Activated naive CD4-positive, alpha-beta T cell treated with anti-CD3 and anti-CD28 coated beads for 36 hours (primary cell): ENCODE measurements at regions of chr19 and their contacts with region 1.

Region 1: DNA sequence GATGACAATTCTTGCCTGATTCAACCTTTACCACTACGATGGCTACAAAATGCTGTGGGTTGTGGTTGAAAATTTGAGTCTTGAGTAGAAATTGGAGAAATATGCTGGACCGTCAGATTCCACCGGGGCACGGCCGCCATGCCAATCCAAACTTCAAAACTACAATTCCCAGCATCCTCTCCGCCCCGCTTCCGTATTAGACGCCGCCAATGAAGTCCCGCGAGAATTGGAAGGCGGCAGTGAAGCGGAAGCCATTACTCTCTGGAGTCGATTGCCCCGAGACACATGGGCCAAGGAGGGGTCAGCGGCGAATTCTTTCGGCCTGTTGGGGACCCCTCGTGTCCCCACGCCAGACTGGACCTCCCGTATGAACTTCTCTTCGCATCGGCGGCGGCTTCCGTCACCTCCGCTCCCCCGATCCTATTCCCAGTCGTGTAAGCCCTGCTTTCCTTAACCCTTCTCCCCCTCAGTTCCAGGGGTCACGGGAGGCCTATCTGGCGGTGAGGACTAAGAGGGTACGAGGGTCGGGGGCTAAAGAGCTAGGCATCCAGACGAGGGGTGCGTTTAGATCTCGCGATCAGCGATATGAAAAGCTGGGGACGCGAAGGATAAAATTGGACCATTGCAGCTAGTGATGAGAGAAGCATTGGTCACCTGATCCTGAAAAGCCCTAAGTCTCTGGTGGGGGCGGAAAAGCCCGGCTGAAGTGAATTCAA is at the start of gene ZNF317:
- DNase-seq: peak; percentile 95
- H3K4me3 Mint-ChIP-seq: peak within 1 kb of the TSS; percentile 98
- H3K27ac Mint-ChIP-seq: peak within 1 kb of the TSS; percentile 96
- H3K4me1 Mint-ChIP-seq: peaks cover 36% of the 10 kb centered on the region
- H3K27me3 Mint-ChIP-seq: no peaks in the 10 kb centered on the region
- total RNA-seq, gene ZNF317: 38.9 to 39.7 TPM

Region 2: GRCh38 chr19:9165256-9165655 is 24.9 kb after region 1 on chr19:
- CTCF ChIA-PET with region 1: no interaction called
- intact Hi-C with region 1: no loop called
- DNase-seq: no peak
- H3K4me3 Mint-ChIP-seq: no peak overlapping the region
- H3K27ac Mint-ChIP-seq: no peak overlapping the region
- H3K4me1 Mint-ChIP-seq: no peaks in the 10 kb centered on the region
- H3K27me3 Mint-ChIP-seq: no peaks in the 10 kb centered on the region

Region 3: GRCh38 chr19:9205501-9206113 is 65.3 kb after region 1 on chr19:
- CTCF ChIA-PET with region 1: no interaction called
- intact Hi-C with region 1: loop called (anchors 1 kb)
- DNase-seq: peak; percentile 76
- H3K4me3 Mint-ChIP-seq: peak overlapping the region; percentile 25
- H3K27ac Mint-ChIP-seq: no peak overlapping the region
- H3K4me1 Mint-ChIP-seq: peaks cover 2% of the 10 kb centered on the region
- H3K27me3 Mint-ChIP-seq: peaks cover 2% of the 10 kb centered on the region

Region 4: DNA sequence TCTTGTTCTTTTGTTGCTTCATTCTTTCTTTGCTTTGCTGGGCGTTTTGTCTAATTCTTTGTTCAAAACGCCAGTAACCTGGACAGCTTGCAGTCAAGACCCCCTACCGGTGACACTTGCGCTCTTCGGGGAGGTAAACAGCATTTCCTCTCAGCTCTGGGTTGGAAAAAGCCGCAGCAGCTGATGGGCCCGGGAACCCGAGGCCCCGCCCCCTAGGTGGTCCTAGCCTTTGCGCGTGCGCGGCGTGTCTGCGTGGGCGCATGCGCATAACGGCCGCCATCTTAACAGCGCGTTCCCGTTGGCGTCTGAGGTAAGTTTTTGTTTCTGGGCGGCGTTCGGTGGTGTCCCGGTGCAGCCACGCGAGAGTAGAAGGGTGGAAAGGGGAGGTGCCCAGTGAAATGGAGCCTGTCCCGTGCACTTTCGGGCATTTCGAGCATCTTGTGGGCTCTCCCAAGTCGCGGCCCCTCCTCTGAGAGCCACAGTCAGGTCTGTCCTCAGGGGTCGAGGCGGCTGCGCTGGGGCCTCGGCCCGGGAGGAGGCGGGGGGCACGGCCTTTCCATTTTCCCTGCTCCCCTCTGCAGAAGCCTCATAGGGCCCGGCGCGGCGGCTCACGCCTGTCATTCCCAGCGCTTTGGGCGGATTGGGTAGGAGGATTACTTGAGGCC is 183.7 kb after region 1 on chr19 and contains the start of gene ZNF559:
- CTCF ChIA-PET with region 1: no interaction called
- intact Hi-C with region 1: loop called (anchors 1 kb)
- DNase-seq: peak; percentile 97
- H3K4me3 Mint-ChIP-seq: peak within 1 kb of the TSS; percentile 90
- H3K27ac Mint-ChIP-seq: peak within 1 kb of the TSS; percentile 93
- H3K4me1 Mint-ChIP-seq: peaks cover 28% of the 10 kb centered on the region
- H3K27me3 Mint-ChIP-seq: no peaks in the 10 kb centered on the region
- total RNA-seq, gene ZNF559: 10.3 to 11.2 TPM

Region 5: GRCh38 chr19:9584073-9584833 is 443.9 kb after region 1 on chr19 and contains the start of gene ZNF121:
- CTCF ChIA-PET with region 1: no interaction called
- intact Hi-C with region 1: loop called (anchors 1 kb)
- DNase-seq: peak; percentile 88
- H3K4me3 Mint-ChIP-seq: peak within 1 kb of the TSS; percentile 91
- H3K27ac Mint-ChIP-seq: peak within 1 kb of the TSS; percentile 95
- H3K4me1 Mint-ChIP-seq: peaks cover 33% of the 10 kb centered on the region
- H3K27me3 Mint-ChIP-seq: peaks cover 2% of the 10 kb centered on the region
- total RNA-seq, gene ZNF121: 57.1 to 60.1 TPM

Region 6: DNA sequence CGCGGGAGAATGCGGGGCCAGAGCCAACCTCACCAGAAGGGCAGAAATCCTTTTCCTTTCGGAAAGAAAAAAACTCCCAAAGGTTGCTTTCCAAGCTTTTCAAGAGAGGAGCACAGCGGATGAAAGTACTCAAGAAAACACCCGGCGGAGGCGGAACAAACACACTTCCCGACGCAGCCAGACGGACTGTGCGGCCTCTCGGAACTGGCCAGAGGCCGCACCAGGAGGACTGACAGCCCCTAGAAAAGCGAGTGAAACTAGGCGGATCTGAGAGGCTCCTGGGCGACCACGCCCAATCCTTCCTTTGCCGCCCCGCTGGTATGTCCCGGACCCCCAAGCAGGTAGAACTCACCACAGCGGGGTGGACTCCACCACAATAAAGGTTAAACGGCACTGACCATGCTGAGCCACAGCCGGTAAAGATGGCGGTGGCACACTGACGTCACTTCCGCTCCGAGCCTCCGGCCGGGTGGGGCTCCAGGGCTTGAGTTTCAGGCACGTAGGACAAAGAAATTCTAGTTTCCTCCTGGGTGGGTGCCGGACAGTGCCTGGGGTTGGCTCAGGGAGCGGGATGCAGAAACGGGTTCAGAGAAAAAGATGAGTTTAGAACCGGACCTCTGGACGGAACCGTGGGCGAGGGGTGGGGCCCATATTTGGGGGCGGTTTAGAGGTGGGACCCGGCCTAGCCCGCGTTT is 534.5 kb after region 1 on chr19 and contains the start of gene ZNF562:
- CTCF ChIA-PET with region 1: no interaction called
- intact Hi-C with region 1: loop called (anchors 5 kb)
- DNase-seq: peak; percentile 86
- H3K4me3 Mint-ChIP-seq: peak within 1 kb of the TSS; percentile 90
- H3K27ac Mint-ChIP-seq: peak within 1 kb of the TSS; percentile 98
- H3K4me1 Mint-ChIP-seq: peaks cover 23% of the 10 kb centered on the region
- H3K27me3 Mint-ChIP-seq: no peaks in the 10 kb centered on the region
- total RNA-seq, gene ZNF562: 20.1 to 21.9 TPM

Region 7: GRCh38 chr19:9818734-9819589 is 678.6 kb after region 1 on chr19 and contains the start of gene FBXL12:
- CTCF ChIA-PET with region 1: no interaction called
- intact Hi-C with region 1: loop called (anchors 1 kb)
- DNase-seq: peak; percentile 100
- H3K4me3 Mint-ChIP-seq: peak within 1 kb of the TSS; percentile 82
- H3K27ac Mint-ChIP-seq: peak within 1 kb of the TSS; percentile 86
- H3K4me1 Mint-ChIP-seq: peaks cover 31% of the 10 kb centered on the region
- H3K27me3 Mint-ChIP-seq: no peaks in the 10 kb centered on the region
- total RNA-seq, gene FBXL12: 17.5 to 19.8 TPM

Region 8: GRCh38 chr19:9914315-9915207 is 774.2 kb after region 1 on chr19:
- CTCF ChIA-PET with region 1: no interaction called
- intact Hi-C with region 1: loop called (anchors 10 kb)
- DNase-seq: peak; percentile 90
- H3K4me3 Mint-ChIP-seq: peak overlapping the region; percentile 71
- H3K27ac Mint-ChIP-seq: no peak overlapping the region
- H3K4me1 Mint-ChIP-seq: peaks cover 4% of the 10 kb centered on the region
- H3K27me3 Mint-ChIP-seq: peaks cover 16% of the 10 kb centered on the region